ENCODE measurements at regions of chrX and their contacts with region 1.

Region 1: GRCh38 chrX:86887341-86887740 is 630.3 kb upstream of the KLHL4 start:
- DNase-seq: no peak
- ATAC-seq: no peak
- H3K4me3 ChIP-seq: no peak overlapping the region
- H3K27ac ChIP-seq: no peak overlapping the region
- H3K4me1 ChIP-seq: no peaks in the 10 kb centered on the region
- H3K27me3 ChIP-seq: no peaks in the 10 kb centered on the region
- CTCF ChIP-seq: no peak
- POLR2A ChIP-seq: no peak
- RAD21 ChIP-seq: no peak

Region 2: DNA sequence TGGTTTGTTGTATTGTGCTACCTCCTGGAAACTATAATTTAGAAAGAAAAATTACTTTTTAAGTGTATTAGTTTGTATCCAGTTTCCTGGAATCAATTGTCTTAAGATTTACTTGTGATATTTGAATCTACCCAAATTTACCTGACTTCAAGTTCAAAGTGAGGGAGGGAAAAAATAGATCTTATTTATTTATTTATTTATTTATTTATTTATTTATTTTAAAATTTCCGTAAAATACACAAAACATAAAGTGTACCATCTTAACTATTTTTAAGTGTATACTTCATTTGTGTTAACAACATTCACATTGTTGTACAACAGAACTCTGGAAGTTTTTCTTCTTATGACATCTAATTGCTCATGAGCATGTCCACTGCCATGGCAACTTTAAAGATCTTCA is 383.0 kb before region 1 on chrX:
- CTCF ChIA-PET with region 1: no interaction called
- POLR2A ChIA-PET with region 1: no interaction called
- dilution Hi-C with region 1: no loop called
- in situ Hi-C with region 1: no loop called
- intact Hi-C with region 1: loop called (anchors 5 kb)
- DNase-seq: no peak
- ATAC-seq: no peak
- H3K4me3 ChIP-seq: no peak overlapping the region
- H3K27ac ChIP-seq: no peak overlapping the region
- H3K4me1 ChIP-seq: no peaks in the 10 kb centered on the region
- H3K27me3 ChIP-seq: no peaks in the 10 kb centered on the region
- CTCF ChIP-seq: no peak
- POLR2A ChIP-seq: no peak
- RAD21 ChIP-seq: no peak

Region 3: DNA sequence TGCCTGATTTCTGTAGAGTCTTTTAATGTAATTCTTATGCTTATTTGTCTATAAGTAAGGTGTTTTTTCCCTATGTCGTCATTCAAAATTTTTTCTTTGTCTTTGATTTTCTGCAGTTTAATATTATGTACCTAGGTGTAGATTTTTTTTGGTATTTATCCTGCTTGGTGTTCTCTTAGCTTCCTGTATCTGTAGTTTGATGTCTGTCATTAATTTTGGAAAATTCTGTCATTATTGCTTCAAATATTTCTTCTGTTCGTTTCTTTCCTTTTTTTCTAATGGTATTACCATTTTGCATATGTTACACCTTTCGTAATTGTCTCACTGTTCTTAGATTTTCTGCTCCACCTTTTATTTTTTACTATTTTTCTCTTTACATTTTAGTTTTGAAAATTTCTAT is 42.2 kb before region 1 on chrX:
- CTCF ChIA-PET with region 1: no interaction called
- POLR2A ChIA-PET with region 1: no interaction called
- dilution Hi-C with region 1: no loop called
- in situ Hi-C with region 1: no loop called
- intact Hi-C with region 1: no loop called
- DNase-seq: no peak
- ATAC-seq: no peak
- H3K4me3 ChIP-seq: no peak overlapping the region
- H3K27ac ChIP-seq: no peak overlapping the region
- H3K4me1 ChIP-seq: no peaks in the 10 kb centered on the region
- H3K27me3 ChIP-seq: no peaks in the 10 kb centered on the region
- CTCF ChIP-seq: no peak
- POLR2A ChIP-seq: no peak
- RAD21 ChIP-seq: no peak

Region 4: DNA sequence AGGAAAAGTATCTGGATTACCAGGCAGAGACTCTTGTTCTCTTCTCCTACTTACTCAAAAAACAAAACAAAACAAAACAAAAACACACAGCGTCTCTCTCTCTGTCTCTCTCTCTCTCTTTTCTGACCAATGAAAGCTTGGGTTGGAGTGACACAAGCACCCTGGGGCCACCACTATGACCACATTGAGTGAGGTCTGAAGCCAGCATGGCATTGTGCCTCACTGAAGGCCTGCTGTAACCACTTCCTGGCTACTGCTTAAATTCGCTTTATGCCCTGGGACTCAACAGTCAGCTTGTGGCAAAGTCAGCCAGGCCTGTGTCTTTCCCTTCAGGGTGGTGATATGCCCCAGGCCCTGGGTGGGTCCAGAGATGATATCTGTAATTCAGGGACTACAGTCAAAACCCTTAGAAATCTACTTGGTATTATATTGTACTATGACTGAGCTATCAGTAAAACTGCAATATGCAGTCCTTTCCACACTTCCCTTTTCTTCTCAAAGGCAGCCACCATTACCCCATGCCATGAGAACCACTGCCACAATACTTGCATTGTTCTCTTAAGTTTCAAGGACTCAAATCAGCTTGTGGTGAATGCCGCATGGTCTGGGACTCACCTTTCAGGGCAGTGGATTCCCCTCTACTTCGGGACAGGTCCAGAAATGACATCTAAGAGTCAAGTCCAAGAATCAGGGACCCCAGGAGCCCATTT is 23.4 kb after region 1 on chrX:
- CTCF ChIA-PET with region 1: no interaction called
- POLR2A ChIA-PET with region 1: no interaction called
- dilution Hi-C with region 1: no loop called
- in situ Hi-C with region 1: no loop called
- intact Hi-C with region 1: no loop called
- DNase-seq: no peak
- ATAC-seq: no peak
- H3K4me3 ChIP-seq: no peak overlapping the region
- H3K27ac ChIP-seq: no peak overlapping the region
- H3K4me1 ChIP-seq: no peaks in the 10 kb centered on the region
- H3K27me3 ChIP-seq: no peaks in the 10 kb centered on the region
- CTCF ChIP-seq: no peak
- POLR2A ChIP-seq: no peak
- RAD21 ChIP-seq: no peak

Region 5: DNA sequence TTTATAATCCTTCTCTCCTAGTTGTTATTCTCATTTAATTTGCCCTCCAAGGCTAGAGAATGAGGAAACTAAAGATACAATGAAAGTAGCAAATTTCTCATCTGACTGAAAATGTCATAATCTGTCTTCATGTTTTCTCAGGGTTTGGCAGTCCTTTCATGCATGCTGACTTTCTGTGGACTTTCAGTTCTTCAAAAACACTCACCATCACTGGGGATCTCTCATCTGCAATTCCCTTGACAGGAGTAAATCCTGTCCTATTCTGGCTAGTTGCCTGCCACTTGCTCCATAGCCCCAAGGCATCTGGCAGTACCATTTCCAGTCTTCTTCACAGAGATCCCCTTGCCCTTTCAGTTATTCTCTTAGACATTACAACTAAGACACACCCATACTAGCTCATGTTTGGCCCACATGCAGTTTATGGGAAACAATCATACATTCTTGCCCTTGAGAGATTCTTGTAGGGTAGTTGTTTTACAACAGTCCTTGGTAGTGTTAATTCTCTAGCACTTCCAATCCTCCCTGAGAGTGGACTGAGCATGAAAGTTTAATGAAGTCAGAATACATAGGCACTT is 180.5 kb after region 1 on chrX:
- CTCF ChIA-PET with region 1: no interaction called
- POLR2A ChIA-PET with region 1: no interaction called
- dilution Hi-C with region 1: no loop called
- in situ Hi-C with region 1: no loop called
- intact Hi-C with region 1: no loop called
- DNase-seq: no peak
- ATAC-seq: no peak
- H3K4me3 ChIP-seq: no peak overlapping the region
- H3K27ac ChIP-seq: no peak overlapping the region
- H3K4me1 ChIP-seq: no peaks in the 10 kb centered on the region
- H3K27me3 ChIP-seq: no peaks in the 10 kb centered on the region
- CTCF ChIP-seq: no peak
- POLR2A ChIP-seq: no peak
- RAD21 ChIP-seq: no peak

Measured in IMR-90 (cell line).